OCI-LY7 (cell line): ENCODE measurements at regions of chr1 and their contacts with region 1.

Region 1: DNA sequence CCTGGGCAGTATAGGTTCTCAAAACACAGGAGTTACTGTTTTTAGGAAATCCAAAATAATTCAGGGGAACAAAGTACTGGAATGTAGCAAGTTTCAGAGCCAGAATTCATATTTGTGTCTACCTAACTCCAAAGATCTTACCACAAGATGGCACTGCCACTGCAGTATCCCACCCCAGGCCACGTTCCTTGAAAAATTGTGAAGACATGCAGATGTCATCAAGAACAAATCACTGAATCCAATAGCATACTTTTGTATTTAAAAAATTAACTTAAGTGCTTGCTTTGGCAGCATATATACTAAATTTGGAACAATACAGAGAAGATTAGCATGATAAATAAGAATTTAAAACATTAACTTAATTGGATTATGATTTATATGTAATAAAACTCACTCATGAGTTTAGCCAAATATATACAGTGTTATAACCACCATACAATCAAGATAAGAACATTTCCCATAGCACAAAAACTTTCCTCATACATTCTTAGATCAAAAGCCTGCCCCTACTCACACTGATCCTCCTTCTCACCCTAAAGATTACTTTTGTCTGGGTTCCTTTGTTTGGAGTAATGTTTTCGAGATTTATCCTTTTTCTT is 209.9 kb downstream of the FAF1 start:
- DNase-seq: peak; percentile 35
- H3K4me3 ChIP-seq: no peak overlapping the region
- H3K27ac ChIP-seq: no peak overlapping the region
- H3K4me1 ChIP-seq: no peaks in the 10 kb centered on the region
- CTCF ChIP-seq: peak; percentile 83

Region 2: DNA sequence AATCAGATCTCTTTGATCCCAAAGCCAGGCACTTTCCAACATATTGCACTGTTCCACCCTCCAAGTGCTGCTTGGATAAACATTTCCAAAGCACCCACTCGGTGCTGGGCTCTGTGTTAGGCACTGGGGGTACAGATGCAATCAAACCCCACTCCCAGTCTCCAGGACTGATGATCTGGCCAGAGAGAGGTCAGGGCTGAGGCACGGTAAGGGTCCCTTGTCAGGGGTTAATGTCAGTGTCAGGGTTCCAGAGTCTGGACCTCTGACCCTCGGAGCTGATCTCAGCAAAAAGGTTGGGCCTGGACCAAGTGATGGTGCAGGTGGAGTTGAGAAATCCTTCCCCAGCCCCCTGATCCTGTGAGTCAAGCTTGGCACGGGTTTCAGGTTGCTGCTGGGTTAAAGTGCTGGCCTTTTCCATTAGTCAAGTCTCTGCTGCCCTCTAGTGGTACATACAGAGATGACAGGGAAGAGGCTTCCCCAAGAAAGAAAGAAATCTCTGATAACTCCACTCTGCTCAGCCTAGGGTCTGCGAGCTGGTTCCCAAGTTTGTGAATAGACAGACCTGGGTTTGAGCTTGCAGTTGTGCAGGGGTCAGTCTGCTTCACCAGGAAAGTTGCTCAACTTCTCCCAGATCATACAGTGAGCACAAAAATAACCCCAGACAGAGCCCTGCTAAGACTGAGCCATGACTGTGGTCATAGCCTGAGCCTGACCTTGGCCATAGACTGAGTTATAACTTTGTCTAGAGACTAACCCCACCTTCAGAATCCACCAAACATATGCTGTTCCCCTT is 401.5 kb before region 1 on chr1:
- CTCF ChIA-PET with region 1: no interaction called
- POLR2A ChIA-PET with region 1: no interaction called
- intact Hi-C with region 1: no loop called
- DNase-seq: peak; percentile 67
- H3K4me3 ChIP-seq: no peak overlapping the region
- H3K27ac ChIP-seq: no peak overlapping the region
- H3K4me1 ChIP-seq: no peaks in the 10 kb centered on the region
- CTCF ChIP-seq: peak; percentile 88

Region 3: DNA sequence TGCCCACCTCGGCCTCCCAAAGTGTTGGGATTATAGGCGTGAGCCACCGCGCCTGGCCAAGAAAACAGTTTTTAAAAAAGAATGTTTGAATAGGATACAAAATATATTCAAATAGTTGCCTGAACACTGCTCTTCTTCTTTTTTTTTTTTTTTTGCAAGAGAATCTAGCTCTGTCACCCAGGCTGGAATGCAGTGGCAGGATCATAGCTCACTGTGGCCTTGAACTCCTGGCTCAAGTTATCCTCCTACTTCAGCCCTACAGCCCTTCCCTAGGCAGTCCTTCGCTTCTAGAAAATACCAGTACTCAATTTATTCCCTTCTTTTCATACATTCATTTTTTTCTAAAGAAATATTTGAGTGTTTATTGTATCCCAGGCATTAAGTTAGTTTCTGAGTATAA is 934.7 kb after region 1 on chr1:
- CTCF ChIA-PET with region 1: no interaction called
- POLR2A ChIA-PET with region 1: no interaction called
- intact Hi-C with region 1: loop called (anchors 5 kb)
- DNase-seq: no peak
- H3K4me3 ChIP-seq: no peak overlapping the region
- H3K27ac ChIP-seq: no peak overlapping the region
- H3K4me1 ChIP-seq: no peaks in the 10 kb centered on the region
- CTCF ChIP-seq: no peak